Left lung (tissue), 14 donors: ENCODE measurements at regions of chr17 and their contacts with region 1.

Region 1: GRCh38 chr17:17888821-17889220 is 52.0 kb upstream of the SREBF1 start:
- DNase-seq: no peak
- ATAC-seq: no peak
- H3K4me3 ChIP-seq: no peak overlapping the region
- H3K27ac ChIP-seq: no peak overlapping the region
- H3K4me1 ChIP-seq: peaks cover 9 to 10% of the 10 kb centered on the region in 2 donors
- H3K27me3 ChIP-seq: no peaks in the 10 kb centered on the region
- CTCF ChIP-seq: no peak

Region 2: DNA sequence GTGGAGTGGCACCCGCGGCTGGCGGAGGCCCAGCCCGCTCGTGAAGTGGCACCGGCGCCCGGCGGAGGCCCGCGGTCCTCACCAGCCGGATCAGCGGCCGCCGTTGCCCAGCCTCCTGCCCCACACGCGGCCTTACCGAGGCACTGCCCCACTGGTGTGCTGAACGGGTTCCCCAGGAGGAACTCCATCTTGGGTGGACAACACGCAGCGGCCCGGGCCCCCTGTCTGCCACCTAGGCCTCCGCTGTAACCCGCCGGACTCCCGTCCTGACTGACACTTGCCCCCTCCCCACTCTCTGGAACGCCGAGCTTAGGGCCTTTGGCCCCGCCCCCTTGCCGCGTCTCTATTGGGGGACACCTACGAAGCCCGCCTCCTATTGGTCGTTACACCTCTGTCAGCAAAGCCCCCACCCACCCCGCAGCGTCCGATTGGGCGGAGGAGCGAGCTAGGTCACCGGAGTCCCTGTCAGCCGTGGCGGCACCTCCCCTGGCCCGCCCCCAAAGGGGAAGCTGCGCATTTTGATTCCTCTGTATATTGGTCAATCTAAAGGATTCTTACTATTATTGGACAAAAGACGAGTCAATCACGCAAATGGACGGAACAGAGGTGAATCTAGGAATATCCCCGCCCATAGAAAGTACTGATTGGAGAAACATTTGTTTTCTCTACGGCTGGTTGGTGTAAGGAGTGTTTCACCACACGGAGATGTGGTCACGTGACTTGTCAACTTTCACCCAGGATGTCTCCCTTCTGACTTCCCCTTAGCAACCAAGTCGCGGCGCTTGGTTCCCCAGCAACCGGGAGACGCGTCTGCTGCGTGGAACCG is 83.5 kb after region 1 on chr17 and contains the starts of genes DRC3 and TOM1L2:
- intact Hi-C with region 1: no loop called
- DNase-seq: peak; percentile 99 to 100 (median 100)
- ATAC-seq: peak; percentile 97
- H3K4me3 ChIP-seq: peak within 1 kb of the TSS; percentile 86 to 95
- H3K27ac ChIP-seq: peak within 1 kb of the TSS; percentile 83 to 94
- H3K4me1 ChIP-seq: peaks cover 11 to 38% of the 10 kb centered on the region in 2 donors
- H3K27me3 ChIP-seq: no peaks in the 10 kb centered on the region
- CTCF ChIP-seq: peak in 1 of 2 donors; percentile 25
- polyA plus RNA-seq, gene DRC3: 13.3 to 22.8 (median 19.0) TPM
- polyA plus RNA-seq, gene TOM1L2: 51.2 to 62.3 (median 57.4) TPM

Region 3: GRCh38 chr17:18038861-18039534 is 150.2 kb after region 1 on chr17 and contains the starts of genes ATPAF2 and GID4:
- intact Hi-C with region 1: loop called in 1 of 2 experiments (anchors 10 kb)
- DNase-seq: peak; percentile 98 to 100 (median 100)
- ATAC-seq: peak; percentile 97
- H3K4me3 ChIP-seq: peak within 1 kb of the TSS; percentile 87 to 96
- H3K27ac ChIP-seq: peak within 1 kb of the TSS; percentile 68 to 79
- H3K4me1 ChIP-seq: peaks cover 8 to 51% of the 10 kb centered on the region in 2 donors
- H3K27me3 ChIP-seq: no peaks in the 10 kb centered on the region
- CTCF ChIP-seq: no peak
- polyA plus RNA-seq, gene ATPAF2: 21.3 to 26.6 (median 22.8) TPM
- polyA plus RNA-seq, gene GID4: 12.4 to 15.1 (median 13.4) TPM